Endothelial cell of umbilical vein (primary cell): ENCODE measurements at regions of chr6 and their contacts with region 1.

Region 1: GRCh38 chr6:121521892-121522664 is 86.6 kb downstream of the GJA1 start:
- DNase-seq: peak; percentile 99
- H3K4me3 ChIP-seq: peak overlapping the region in 1 of 3 experiments; percentile 20
- H3K27ac ChIP-seq: peak overlapping the region; percentile 100
- H3K4me1 ChIP-seq: peaks cover 49% of the 10 kb centered on the region
- H3K27me3 ChIP-seq: no peaks in the 10 kb centered on the region
- CTCF ChIP-seq: no peak
- POLR2A ChIP-seq: peak; percentile 82

Region 2: DNA sequence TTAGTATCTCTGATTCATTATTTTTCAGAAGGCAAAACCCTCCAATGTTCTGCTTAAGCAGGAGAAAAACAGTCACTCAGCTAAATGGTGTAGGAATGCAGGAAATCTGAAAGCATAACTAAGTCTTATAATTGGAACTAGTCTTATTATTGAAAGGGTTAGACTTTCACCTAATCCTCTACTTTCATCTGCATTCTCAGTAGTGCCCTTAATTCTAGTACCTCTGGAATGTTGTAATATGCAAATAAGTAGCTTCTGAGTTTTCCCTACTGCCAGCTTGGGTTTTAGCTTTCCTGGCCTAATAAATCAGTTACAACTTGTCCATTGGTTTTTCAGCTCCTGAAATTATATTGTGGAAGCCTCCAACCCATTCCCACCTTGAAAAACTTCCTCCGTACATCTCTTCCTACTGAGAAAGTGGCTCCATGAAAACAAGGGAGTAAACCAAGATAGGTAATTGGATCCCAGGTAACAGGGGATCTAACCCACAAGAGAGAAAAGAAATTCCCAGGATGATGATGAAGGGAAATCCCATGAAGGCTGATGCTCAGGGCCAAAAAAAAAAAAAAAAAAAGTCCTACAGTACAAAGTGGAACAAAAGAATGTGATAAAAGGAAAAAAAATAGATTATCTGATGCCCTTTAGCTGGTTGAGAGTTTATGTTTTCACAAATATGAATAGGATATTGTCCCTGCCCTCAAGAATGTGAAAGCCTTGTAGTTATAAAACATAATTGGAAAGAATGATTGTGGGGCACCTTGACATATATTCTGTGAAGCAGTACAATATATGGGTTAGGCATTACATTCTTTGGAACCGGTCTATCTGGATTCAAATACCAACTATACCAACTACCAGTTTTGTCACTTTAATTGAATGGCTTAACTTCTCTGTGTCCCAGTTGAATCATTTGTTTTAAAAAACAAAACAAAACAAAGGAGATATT is 334.6 kb before region 1 on chr6:
- CTCF ChIA-PET with region 1: no interaction called
- POLR2A ChIA-PET with region 1: no interaction called
- dilution Hi-C with region 1: no loop called
- intact Hi-C with region 1: no loop called
- DNase-seq: no peak
- H3K4me3 ChIP-seq: no peak overlapping the region
- H3K27ac ChIP-seq: no peak overlapping the region
- H3K4me1 ChIP-seq: no peaks in the 10 kb centered on the region
- H3K27me3 ChIP-seq: no peaks in the 10 kb centered on the region
- CTCF ChIP-seq: no peak
- POLR2A ChIP-seq: no peak

Region 3: GRCh38 chr6:121334299-121335086 is 187.6 kb before region 1 on chr6 and contains the start of gene TBC1D32:
- CTCF ChIA-PET with region 1: interaction called, 3 read pairs
- POLR2A ChIA-PET with region 1: no interaction called
- dilution Hi-C with region 1: no loop called
- intact Hi-C with region 1: loop called (anchors 5 kb)
- DNase-seq: peak; percentile 95
- H3K4me3 ChIP-seq: peak within 1 kb of the TSS; percentile 82 to 99 (median 90)
- H3K27ac ChIP-seq: peak within 1 kb of the TSS; percentile 97
- H3K4me1 ChIP-seq: peaks cover 5% of the 10 kb centered on the region
- H3K27me3 ChIP-seq: no peaks in the 10 kb centered on the region
- CTCF ChIP-seq: no peak
- POLR2A ChIP-seq: peak; percentile 58
- total RNA-seq, gene TBC1D32: 4.0 and 4.3 TPM in 2 replicates

Region 4: DNA sequence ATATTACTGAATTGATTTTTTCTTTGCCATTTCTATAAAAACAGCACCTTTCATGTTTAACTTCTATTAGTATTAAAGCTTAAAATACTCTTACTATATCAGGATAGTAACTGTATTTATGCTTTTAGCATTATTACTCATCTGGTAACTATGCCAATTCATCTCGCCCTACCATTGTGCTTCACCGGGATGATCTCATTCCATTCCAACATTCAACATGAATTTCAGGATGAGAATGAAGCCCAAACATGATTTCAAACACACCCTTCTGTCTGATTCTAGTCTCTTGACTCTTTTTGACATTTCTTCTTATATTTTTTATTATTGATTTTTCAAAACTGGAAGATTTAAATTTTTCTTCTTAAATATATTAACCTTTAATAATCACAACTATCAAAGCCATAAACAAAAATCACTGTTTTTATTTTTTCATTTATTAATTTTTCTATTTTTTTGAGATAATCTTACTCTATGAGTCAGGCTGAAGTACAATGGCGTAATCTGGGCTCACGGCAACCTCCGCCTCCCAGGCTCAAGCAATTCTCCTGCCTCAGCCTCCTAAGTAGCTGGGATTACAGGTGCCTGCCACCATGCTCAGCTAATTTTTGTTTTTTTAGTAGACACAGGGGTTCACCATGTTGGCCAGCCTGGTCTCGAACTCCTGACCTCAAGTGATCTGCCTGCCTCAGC is 39.9 kb before region 1 on chr6:
- CTCF ChIA-PET with region 1: interaction called, 4 read pairs
- POLR2A ChIA-PET with region 1: no interaction called
- dilution Hi-C with region 1: no loop called
- intact Hi-C with region 1: loop called (anchors 1 kb)
- DNase-seq: peak; percentile 89
- H3K4me3 ChIP-seq: no peak overlapping the region
- H3K27ac ChIP-seq: peak overlapping the region; percentile 72
- H3K4me1 ChIP-seq: peaks cover 9% of the 10 kb centered on the region
- H3K27me3 ChIP-seq: no peaks in the 10 kb centered on the region
- CTCF ChIP-seq: no peak
- POLR2A ChIP-seq: no peak

Region 5: DNA sequence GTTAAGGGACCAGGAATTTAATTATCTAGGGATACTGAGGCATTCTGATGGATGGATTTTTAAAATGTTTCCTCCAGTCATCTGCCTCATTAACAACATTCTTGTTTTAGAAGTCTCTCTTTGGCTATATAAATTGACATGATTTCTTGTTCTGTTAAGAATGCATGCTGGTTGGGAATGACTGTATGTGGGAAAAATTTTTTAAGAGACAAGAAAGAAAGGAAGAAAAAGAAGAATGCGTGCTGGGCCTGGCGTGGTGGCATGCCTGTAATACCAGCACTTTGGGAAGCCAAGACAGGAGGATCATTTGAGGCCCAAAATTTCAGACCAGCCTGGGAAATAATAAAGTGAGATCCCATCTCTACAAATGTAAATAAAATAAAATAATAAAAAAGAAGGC is 117.0 kb after region 1 on chr6:
- CTCF ChIA-PET with region 1: no interaction called
- POLR2A ChIA-PET with region 1: no interaction called
- dilution Hi-C with region 1: no loop called
- intact Hi-C with region 1: no loop called
- DNase-seq: no peak
- H3K4me3 ChIP-seq: no peak overlapping the region
- H3K27ac ChIP-seq: no peak overlapping the region
- H3K4me1 ChIP-seq: no peaks in the 10 kb centered on the region
- H3K27me3 ChIP-seq: no peaks in the 10 kb centered on the region
- CTCF ChIP-seq: no peak
- POLR2A ChIP-seq: no peak

Region 6: GRCh38 chr6:121652726-121653623 is 130.9 kb after region 1 on chr6:
- CTCF ChIA-PET with region 1: interaction called, 5 read pairs
- POLR2A ChIA-PET with region 1: interaction called, 7 read pairs
- dilution Hi-C with region 1: no loop called
- intact Hi-C with region 1: loop called (anchors 1 kb)
- DNase-seq: peak; percentile 96
- H3K4me3 ChIP-seq: peak overlapping the region in 1 of 3 experiments; percentile 57
- H3K27ac ChIP-seq: peak overlapping the region; percentile 98
- H3K4me1 ChIP-seq: peaks cover 51% of the 10 kb centered on the region
- H3K27me3 ChIP-seq: no peaks in the 10 kb centered on the region
- CTCF ChIP-seq: no peak
- POLR2A ChIP-seq: peak; percentile 29

Region 7: DNA sequence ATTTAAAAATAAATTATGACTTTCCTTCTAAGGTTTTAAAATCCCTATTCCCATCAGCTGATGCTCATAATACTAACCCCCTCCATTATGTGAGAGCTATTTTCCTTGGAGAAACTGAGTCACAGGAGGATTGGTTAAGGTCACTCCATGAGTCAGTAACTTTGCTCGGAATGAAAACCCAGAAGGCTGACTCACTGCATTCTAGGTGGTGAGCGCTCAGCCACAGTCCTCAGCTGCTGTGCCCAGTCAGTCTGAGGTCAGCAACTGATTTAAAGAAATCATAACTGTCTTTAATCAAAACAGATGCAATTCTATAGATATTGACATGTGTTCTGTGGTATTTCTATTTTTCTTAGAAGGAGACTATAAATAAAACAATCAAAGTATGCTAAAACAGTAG is 272.6 kb after region 1 on chr6:
- CTCF ChIA-PET with region 1: no interaction called
- POLR2A ChIA-PET with region 1: no interaction called
- dilution Hi-C with region 1: no loop called
- intact Hi-C with region 1: loop called (anchors 1 kb)
- DNase-seq: peak; percentile 81
- H3K4me3 ChIP-seq: no peak overlapping the region
- H3K27ac ChIP-seq: peak overlapping the region; percentile 34
- H3K4me1 ChIP-seq: peaks cover 7% of the 10 kb centered on the region
- H3K27me3 ChIP-seq: no peaks in the 10 kb centered on the region
- CTCF ChIP-seq: no peak
- POLR2A ChIP-seq: no peak

Region 8: GRCh38 chr6:121849477-121849876 is 327.4 kb after region 1 on chr6:
- CTCF ChIA-PET with region 1: interaction called, 30 read pairs
- POLR2A ChIA-PET with region 1: interaction called, 3 read pairs
- dilution Hi-C with region 1: no loop called
- intact Hi-C with region 1: loop called (anchors 1 kb)
- DNase-seq: peak; percentile 88
- H3K4me3 ChIP-seq: no peak overlapping the region
- H3K27ac ChIP-seq: no peak overlapping the region
- H3K4me1 ChIP-seq: no peaks in the 10 kb centered on the region
- H3K27me3 ChIP-seq: no peaks in the 10 kb centered on the region
- CTCF ChIP-seq: peak; percentile 75 to 87
- POLR2A ChIP-seq: no peak